WTC11 (cell line): ENCODE measurements at regions of chr12 and their contacts with region 1.

Region 1: DNA sequence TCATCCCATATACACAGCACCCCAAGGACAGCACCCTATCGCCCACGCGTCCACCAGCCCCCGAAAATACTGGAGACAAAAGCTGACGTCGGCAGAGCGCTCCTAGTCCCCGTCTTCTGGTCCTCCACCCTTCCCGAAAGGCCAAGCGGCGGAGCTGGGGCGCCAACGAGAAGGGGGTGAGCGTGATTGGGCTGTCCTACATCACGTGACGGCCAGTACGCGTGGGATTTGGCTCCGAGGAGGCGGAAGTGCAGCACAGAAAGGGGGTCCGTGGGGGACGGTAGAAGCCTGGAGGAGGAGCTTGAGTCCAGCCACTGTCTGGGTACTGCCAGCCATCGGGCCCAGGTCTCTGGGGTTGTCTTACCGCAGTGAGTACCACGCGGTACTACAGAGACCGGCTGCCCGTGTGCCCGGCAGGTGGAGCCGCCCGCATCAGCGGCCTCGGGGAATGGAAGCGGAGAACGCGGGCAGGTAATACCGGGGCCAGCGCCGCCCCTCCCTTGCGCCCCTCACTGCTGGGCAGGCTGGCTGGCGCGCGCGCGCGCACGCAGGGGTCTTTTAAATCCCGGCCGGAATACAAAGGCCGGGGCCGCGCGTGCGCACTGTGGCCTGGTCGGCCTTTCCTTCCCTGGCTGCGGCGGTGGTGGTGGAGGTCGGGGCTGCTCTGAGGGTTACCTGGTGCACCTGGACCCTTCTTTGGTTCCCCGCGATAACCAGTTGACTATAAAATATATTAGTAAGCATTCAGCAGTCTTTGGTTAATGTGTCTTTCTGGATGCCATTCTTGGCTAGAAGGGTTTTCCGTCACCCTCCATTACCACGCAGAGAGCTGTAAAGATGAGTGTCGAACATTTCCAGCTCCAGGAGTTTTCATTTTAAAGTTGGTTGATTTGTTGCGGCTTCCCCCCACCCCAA is at the start of gene TDG:
- DNase-seq: peak; percentile 96
- ATAC-seq: peak; percentile 95
- H3K4me3 Mint-ChIP-seq: peak within 1 kb of the TSS; percentile 96
- H3K27ac Mint-ChIP-seq: peak within 1 kb of the TSS; percentile 99
- H3K4me1 Mint-ChIP-seq: peaks cover 42% of the 10 kb centered on the region
- H3K27me3 Mint-ChIP-seq: no peaks in the 10 kb centered on the region
- CTCF ChIP-seq: no peak
- total RNA-seq, gene TDG: 28.1 to 33.0 TPM (median 32.6 TPM) in 3 replicates

Region 2: DNA sequence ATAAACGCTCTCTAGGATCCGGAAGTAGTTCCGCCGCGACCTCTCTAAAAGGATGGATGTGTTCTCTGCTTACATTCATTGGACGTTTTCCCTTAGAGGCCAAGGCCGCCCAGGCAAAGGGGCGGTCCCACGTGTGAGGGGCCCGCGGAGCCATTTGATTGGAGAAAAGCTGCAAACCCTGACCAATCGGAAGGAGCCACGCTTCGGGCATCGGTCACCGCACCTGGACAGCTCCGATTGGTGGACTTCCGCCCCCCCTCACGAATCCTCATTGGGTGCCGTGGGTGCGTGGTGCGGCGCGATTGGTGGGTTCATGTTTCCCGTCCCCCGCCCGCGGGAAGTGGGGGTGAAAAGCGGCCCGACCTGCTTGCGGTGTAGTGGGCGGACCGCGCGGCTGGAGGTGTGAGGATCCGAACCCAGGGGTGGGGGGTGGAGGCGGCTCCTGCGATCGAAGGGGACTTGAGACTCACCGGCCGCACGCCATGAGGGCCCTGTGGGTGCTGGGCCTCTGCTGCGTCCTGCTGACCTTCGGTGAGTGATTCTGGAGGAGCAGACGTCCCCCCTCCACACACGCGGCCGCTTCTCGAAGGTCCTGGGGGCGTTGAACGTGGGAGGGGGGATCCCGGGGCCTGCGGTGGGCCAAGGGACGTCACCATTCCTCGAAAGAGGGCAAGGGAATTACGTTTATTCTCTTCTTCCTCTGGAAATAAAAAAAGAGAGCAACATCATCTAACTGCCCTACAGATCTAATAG is 35.6 kb before region 1 on chr12 and contains the start of gene HSP90B1:
- CTCF ChIA-PET with region 1: interaction called, 4 read pairs
- POLR2A ChIA-PET with region 1: interaction called, 22 read pairs
- DNase-seq: peak; percentile 99
- ATAC-seq: peak; percentile 87
- H3K4me3 Mint-ChIP-seq: peak within 1 kb of the TSS; percentile 87
- H3K27ac Mint-ChIP-seq: peak within 1 kb of the TSS; percentile 99
- H3K4me1 Mint-ChIP-seq: peaks cover 32% of the 10 kb centered on the region
- H3K27me3 Mint-ChIP-seq: no peaks in the 10 kb centered on the region
- CTCF ChIP-seq: no peak
- total RNA-seq, gene HSP90B1: 711 to 864 TPM (median 761 TPM) in 3 replicates